Endothelial cell of umbilical vein (primary cell): ENCODE measurements at regions of chrX and their contacts with region 1.

Region 1: DNA sequence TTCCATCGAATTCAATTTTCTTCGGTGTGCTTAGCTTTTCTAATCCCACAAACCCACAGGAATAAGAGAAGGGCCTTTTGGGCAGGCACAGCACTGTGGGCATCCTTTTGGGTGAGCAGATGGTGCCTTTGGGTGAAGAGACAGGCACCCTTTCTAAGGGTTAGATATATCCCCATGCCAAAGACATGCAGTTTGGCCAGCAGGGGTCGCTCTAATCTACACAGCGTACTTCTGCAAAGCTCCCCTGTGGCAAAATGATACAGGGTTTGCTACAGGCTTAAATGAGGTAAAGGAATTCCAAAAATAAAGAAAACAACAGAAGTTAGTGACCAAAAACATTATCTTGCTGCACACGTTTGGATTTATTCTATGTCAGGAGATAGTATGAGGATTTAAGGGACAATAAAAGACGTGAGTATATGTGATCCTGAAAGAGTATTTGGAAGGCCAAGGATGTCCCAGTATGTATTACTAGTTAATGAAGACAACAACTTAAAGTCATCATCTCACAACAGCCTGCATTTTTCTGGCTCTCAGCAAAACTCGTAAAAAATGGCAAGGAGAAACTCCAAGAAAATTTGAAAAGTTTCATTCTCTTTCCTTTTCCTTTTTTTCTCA is 49.5 kb downstream of the PHEX start:
- DNase-seq: peak; percentile 46
- H3K4me3 ChIP-seq: no peak overlapping the region
- H3K27ac ChIP-seq: no peak overlapping the region
- H3K4me1 ChIP-seq: peaks cover 2% of the 10 kb centered on the region
- H3K27me3 ChIP-seq: no peaks in the 10 kb centered on the region
- CTCF ChIP-seq: peak; percentile 56 to 67
- POLR2A ChIP-seq: no peak

Region 2: GRCh38 chrX:22069586-22069985 is 12.0 kb before region 1 on chrX:
- CTCF ChIA-PET with region 1: interaction called, 33 read pairs
- POLR2A ChIA-PET with region 1: no interaction called
- dilution Hi-C with region 1: no loop called
- intact Hi-C with region 1: no loop called
- DNase-seq: no peak
- H3K4me3 ChIP-seq: no peak overlapping the region
- H3K27ac ChIP-seq: no peak overlapping the region
- H3K4me1 ChIP-seq: no peaks in the 10 kb centered on the region
- H3K27me3 ChIP-seq: no peaks in the 10 kb centered on the region
- CTCF ChIP-seq: no peak
- POLR2A ChIP-seq: no peak

Region 3: GRCh38 chrX:22147214-22147613 is 65.6 kb after region 1 on chrX:
- CTCF ChIA-PET with region 1: no interaction called
- POLR2A ChIA-PET with region 1: no interaction called
- dilution Hi-C with region 1: no loop called
- intact Hi-C with region 1: no loop called
- DNase-seq: no peak
- H3K4me3 ChIP-seq: no peak overlapping the region
- H3K27ac ChIP-seq: no peak overlapping the region
- H3K4me1 ChIP-seq: no peaks in the 10 kb centered on the region
- H3K27me3 ChIP-seq: no peaks in the 10 kb centered on the region
- CTCF ChIP-seq: no peak
- POLR2A ChIP-seq: no peak

Region 4: GRCh38 chrX:22192417-22193060 is 111.0 kb after region 1 on chrX:
- CTCF ChIA-PET with region 1: interaction called, 6 read pairs
- POLR2A ChIA-PET with region 1: no interaction called
- dilution Hi-C with region 1: no loop called
- intact Hi-C with region 1: loop called (anchors 1 kb)
- DNase-seq: peak; percentile 46
- H3K4me3 ChIP-seq: no peak overlapping the region
- H3K27ac ChIP-seq: no peak overlapping the region
- H3K4me1 ChIP-seq: no peaks in the 10 kb centered on the region
- H3K27me3 ChIP-seq: no peaks in the 10 kb centered on the region
- CTCF ChIP-seq: peak; percentile 56
- POLR2A ChIP-seq: no peak

Region 5: DNA sequence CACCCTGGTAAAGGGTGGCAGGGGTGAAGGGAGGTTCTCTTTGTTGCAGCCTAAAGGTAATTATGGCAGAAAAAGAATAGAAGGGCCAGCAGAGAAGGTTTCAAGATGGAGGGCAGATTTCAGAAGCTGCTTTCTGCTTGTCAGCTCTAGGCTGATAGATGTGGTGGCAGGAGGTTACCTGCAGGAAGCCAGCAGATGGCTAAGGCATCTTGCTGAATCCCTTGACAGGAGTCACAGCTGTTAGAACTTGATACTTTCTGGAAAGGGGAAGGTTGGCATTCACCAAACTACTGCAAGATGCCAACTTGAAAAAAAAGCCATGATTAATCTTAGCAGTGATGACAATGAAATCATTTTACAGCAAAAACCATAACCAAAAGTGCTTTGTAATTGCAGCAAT is 121.6 kb after region 1 on chrX:
- CTCF ChIA-PET with region 1: no interaction called
- POLR2A ChIA-PET with region 1: no interaction called
- dilution Hi-C with region 1: no loop called
- intact Hi-C with region 1: no loop called
- DNase-seq: no peak
- H3K4me3 ChIP-seq: no peak overlapping the region
- H3K27ac ChIP-seq: no peak overlapping the region
- H3K4me1 ChIP-seq: no peaks in the 10 kb centered on the region
- H3K27me3 ChIP-seq: no peaks in the 10 kb centered on the region
- CTCF ChIP-seq: no peak
- POLR2A ChIP-seq: no peak

Region 6: GRCh38 chrX:22748093-22748999 is 666.8 kb after region 1 on chrX:
- CTCF ChIA-PET with region 1: interaction called, 6 read pairs
- POLR2A ChIA-PET with region 1: no interaction called
- dilution Hi-C with region 1: no loop called
- intact Hi-C with region 1: loop called (anchors 2 kb)
- DNase-seq: peak; percentile 46
- H3K4me3 ChIP-seq: no peak overlapping the region
- H3K27ac ChIP-seq: no peak overlapping the region
- H3K4me1 ChIP-seq: no peaks in the 10 kb centered on the region
- H3K27me3 ChIP-seq: no peaks in the 10 kb centered on the region
- CTCF ChIP-seq: peak; percentile 54 to 62
- POLR2A ChIP-seq: no peak

Region 7: DNA sequence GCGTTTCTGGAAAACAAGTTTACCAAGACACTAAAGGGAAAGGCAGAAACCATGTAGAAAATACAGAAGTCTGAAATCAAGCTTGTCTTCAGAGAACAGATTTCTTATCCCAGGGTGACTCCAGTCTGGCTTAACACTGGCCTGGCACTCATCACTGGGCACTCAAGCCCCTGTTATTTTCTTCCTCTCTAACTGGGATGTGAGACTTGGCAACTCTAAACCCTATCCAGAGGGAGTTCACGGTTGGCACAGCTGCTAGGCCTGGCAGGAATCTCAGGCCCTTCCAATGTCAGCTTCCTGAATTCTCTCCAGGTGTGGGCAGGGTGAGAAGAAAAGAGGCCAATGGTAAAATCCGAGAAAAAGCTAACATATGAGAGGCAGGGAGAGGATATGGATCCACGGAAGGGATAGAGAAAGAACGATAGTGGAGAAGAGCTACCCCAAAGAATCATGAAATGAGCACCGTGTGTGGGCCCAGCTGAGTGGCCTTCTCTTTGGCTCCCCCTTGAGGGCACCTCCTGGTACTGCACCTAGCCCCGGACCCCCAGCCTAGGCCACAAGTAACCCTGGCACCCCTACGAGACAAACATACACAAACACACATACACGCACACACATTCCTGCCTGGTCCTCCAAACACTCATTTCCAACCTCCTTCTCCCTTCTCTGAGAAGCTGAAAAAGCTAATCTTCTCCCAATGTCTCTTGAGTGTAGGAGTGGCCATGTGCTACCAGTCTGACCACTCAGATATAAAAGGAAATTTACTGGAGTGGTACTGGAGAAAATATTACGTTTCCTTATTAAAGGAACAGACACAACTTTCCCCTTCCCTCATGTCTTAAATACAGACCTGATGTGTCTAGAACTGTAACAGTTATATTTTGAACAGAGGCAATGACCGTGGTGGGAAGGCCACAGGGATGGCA is 1236.5 kb after region 1 on chrX:
- CTCF ChIA-PET with region 1: interaction called, 35 read pairs
- POLR2A ChIA-PET with region 1: no interaction called
- dilution Hi-C with region 1: no loop called
- intact Hi-C with region 1: loop called (anchors 5 kb)
- DNase-seq: peak; percentile 19
- H3K4me3 ChIP-seq: no peak overlapping the region
- H3K27ac ChIP-seq: no peak overlapping the region
- H3K4me1 ChIP-seq: no peaks in the 10 kb centered on the region
- H3K27me3 ChIP-seq: no peaks in the 10 kb centered on the region
- CTCF ChIP-seq: peak; percentile 59 to 86
- POLR2A ChIP-seq: no peak